Left cardiac atrium (tissue), 4 donors: ENCODE measurements at regions of chr7 and their contacts with region 1.

Region 1: GRCh38 chr7:1579481-1580421 is 9.9 kb upstream of the PSMG3 start:
- DNase-seq: peak; percentile 79
- ATAC-seq: peak; percentile 94 to 95

Region 2: GRCh38 chr7:1210321-1210978 is 369.3 kb before region 1 on chr7:
- intact Hi-C with region 1: no loop called
- DNase-seq: peak; percentile 44
- ATAC-seq: peak in 1 of 2 donors; percentile 27

Region 3: GRCh38 chr7:1632916-1633785 is 53.4 kb after region 1 on chr7:
- intact Hi-C with region 1: no loop called
- DNase-seq: no peak
- ATAC-seq: no peak

Region 4: DNA sequence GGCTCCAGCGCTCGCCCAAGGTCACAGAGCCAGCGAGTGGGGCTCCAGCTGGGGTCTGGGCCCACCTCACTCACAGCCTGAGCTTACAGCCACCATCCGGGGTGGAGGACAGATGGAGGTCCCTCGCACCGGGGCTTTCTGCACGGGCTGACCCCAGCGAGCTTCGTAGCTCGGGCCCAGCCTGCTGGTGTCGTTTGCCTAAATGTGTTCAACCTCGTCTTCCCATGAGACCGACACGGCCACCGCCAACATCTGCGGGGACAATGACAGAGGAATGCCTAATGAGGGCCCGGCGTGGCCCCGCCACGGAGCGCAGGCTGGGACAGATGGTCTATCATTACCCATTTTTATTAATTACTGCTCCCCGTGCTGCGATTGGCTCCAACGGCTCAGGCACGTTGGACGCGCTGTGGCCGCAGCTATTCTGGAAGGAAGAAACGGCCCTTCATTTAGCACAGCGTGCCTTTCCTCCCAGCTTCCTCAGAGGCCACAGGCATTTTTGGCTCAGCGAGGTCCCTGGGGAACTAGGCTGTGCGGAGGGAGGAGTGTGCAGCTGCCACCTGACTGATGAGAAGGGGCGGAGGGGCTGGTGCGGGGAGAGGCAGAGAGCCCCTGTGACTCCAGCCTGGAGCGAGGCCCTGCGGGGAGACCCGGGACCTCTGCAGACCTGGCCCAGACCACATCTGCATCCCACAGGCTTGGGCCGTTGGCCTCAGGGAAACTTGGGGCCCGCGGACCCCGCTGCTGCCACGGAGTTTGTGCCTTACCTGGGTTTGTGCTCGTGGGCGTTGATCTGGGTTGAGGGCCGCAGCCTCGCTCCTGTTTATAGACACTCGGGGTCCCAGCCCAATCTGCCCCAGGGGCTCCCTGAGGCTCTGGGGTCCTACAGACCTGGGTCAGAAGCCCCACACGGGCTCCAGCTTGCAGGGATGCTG is 67.5 kb after region 1 on chr7:
- intact Hi-C with region 1: loop called in 1 of 2 experiments (anchors 5 kb)
- DNase-seq: no peak
- ATAC-seq: peak; percentile 24 to 33

Region 5: GRCh38 chr7:1664711-1665548 is 85.2 kb after region 1 on chr7:
- intact Hi-C with region 1: no loop called
- DNase-seq: peak; percentile 74
- ATAC-seq: peak; percentile 50 to 67

Region 6: GRCh38 chr7:2214636-2215035 is 634.9 kb after region 1 on chr7:
- intact Hi-C with region 1: loop called (anchors 5 kb)
- DNase-seq: no peak
- ATAC-seq: peak; percentile 29 to 59

Region 7: GRCh38 chr7:2354186-2354938 is 774.6 kb after region 1 on chr7 and contains the start of gene EIF3B:
- intact Hi-C with region 1: loop called in 1 of 2 experiments (anchors 2 kb)
- DNase-seq: peak; percentile 92
- ATAC-seq: peak; percentile 95
- total RNA-seq, gene EIF3B: 59.6 to 96.1 TPM